Activated naive CD4-positive, alpha-beta T cell treated with anti-CD3 and anti-CD28 coated beads for 36 hours (primary cell): ENCODE measurements at regions of chr5 and their contacts with region 1.

Region 1: GRCh38 chr5:67549296-67549618 is 352.7 kb upstream of the CD180 start:
- DNase-seq: no peak
- H3K4me3 Mint-ChIP-seq: no peak overlapping the region
- H3K27ac Mint-ChIP-seq: no peak overlapping the region
- H3K4me1 Mint-ChIP-seq: peaks cover 19% of the 10 kb centered on the region
- H3K27me3 Mint-ChIP-seq: no peaks in the 10 kb centered on the region

Region 2: GRCh38 chr5:67510204-67510603 is 39.1 kb before region 1 on chr5:
- CTCF ChIA-PET with region 1: no interaction called
- intact Hi-C with region 1: loop called (anchors 5 kb)
- DNase-seq: no peak
- H3K4me3 Mint-ChIP-seq: no peak overlapping the region
- H3K27ac Mint-ChIP-seq: no peak overlapping the region
- H3K4me1 Mint-ChIP-seq: peaks cover 39% of the 10 kb centered on the region
- H3K27me3 Mint-ChIP-seq: no peaks in the 10 kb centered on the region